Ascending aorta (tissue), 2 donors: ENCODE measurements at regions of chr16 and their contacts with region 1.

Region 1: GRCh38 chr16:30628627-30629540 is 18.7 kb upstream of the ZNF689 start:
- DNase-seq: peak in 1 of 2 donors; percentile 93
- H3K4me3 ChIP-seq: peak overlapping the region in 1 of 2 donors; percentile 40
- H3K27ac ChIP-seq: no peak overlapping the region
- H3K4me1 ChIP-seq: peaks cover 0 to 3% of the 10 kb centered on the region in 2 donors
- H3K27me3 ChIP-seq: no peaks in the 10 kb centered on the region
- CTCF ChIP-seq: peak; percentile 76 to 89 (median 85)

Region 2: GRCh38 chr16:30349675-30350074 is 279.2 kb before region 1 on chr16:
- intact Hi-C with region 1: no loop called
- DNase-seq: peak in 1 of 2 donors; percentile 27
- H3K4me3 ChIP-seq: no peak overlapping the region
- H3K27ac ChIP-seq: no peak overlapping the region
- H3K4me1 ChIP-seq: peaks cover 10 to 29% of the 10 kb centered on the region in 2 donors
- H3K27me3 ChIP-seq: no peaks in the 10 kb centered on the region
- CTCF ChIP-seq: no peak

Region 3: DNA sequence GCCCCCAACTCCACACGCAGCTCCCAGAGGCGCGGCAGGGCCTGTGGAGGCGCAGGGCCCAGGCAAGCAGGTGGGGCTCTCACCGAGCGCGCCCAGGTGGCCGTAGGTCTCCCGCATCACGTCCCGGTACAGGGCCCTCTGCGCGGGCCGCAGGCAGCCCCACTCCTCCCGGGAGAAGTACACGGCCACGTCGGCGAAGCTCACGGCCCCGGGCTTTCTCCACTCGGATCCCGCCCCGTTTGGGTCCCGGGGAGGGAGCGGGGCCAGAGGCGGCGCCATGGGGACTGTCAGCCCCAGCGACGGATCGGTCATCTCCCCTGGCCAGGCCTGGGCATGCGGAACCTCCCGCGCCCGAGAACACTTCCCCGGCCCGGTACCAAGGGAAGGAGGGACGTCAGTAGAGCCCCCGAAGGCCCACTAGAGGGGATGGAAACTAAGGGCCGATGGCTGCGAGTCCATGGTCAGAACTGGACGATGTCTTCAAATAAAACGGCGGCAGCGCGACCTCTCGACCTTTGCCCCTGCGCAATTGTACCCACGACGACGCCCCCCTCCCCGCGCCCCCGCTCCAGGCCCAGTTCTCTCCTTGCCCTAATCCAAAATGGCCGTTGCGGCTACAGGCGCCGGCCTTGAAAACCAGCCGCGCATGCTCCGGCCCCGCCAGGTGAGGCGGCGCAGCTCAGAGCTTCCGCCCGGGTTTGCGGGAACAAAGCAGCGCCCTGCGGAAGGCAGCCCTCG is 94.3 kb before region 1 on chr16 and contains the start of gene ZNF747:
- intact Hi-C with region 1: loop called (anchors 5 kb)
- DNase-seq: peak; percentile 61 to 95
- H3K4me3 ChIP-seq: peak within 1 kb of the TSS; percentile 69 to 93
- H3K27ac ChIP-seq: peak within 1 kb of the TSS; percentile 86 to 96
- H3K4me1 ChIP-seq: peaks cover 11 to 12% of the 10 kb centered on the region in 2 donors
- H3K27me3 ChIP-seq: no peaks in the 10 kb centered on the region
- CTCF ChIP-seq: peak in 1 of 3 experiments; percentile 8
- total RNA-seq, gene ZNF747: 19.6 TPM

Region 4: DNA sequence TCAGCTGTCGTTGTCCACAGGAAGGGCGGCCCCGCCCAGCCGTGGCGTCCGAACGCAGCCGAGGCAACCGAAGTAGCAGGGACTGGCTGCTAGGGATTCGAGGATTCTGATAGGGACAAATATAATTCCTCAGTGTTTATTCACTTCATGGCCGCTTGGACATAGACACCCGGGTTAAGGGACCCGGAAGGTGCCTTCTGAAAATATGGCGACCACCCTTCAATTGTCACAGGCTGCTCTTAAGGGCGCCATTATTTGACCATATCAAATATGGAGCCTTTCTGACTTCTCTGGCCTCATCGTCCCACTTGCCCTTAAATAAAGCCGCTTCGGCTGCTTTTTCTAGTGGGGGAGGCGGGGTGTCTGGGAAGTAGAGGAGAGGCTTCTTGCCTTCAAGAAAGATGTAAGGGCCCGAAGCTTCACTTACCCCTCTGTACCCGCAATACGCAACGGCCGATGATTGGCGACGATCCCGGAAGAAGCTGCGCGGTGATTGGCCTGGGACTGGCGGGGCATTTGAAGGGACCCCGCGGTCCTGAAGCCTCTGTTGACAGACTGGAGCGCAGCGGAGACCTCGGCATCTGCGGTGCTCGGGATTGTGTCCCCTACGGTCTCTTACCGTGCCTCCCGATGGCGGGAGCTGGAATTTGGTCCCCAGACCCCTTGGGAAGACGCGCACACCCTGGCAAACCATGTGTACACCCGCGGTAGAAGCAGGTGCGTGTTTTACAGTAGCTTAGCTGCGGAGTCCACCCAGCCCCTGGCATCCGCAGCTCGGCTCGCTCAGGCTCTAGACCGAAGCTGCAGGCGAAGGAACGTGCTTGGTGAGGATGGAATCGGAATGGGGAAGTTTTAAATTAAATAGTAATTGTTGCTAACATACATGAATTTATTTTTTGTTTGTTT is 56.9 kb before region 1 on chr16 and contains the start of gene ZNF688:
- intact Hi-C with region 1: loop called (anchors 2 kb)
- DNase-seq: peak; percentile 97 to 99
- H3K4me3 ChIP-seq: peak within 1 kb of the TSS; percentile 83 to 92
- H3K27ac ChIP-seq: peak within 1 kb of the TSS; percentile 96 to 99
- H3K4me1 ChIP-seq: peaks cover 13 to 21% of the 10 kb centered on the region in 2 donors
- H3K27me3 ChIP-seq: no peaks in the 10 kb centered on the region
- CTCF ChIP-seq: peak in 1 of 3 experiments; percentile 17
- total RNA-seq, gene ZNF688: 11.3 TPM

Region 5: GRCh38 chr16:30609926-30610839 is 18.7 kb before region 1 on chr16 and contains the start of gene ZNF689:
- intact Hi-C with region 1: loop called (anchors 1 kb)
- DNase-seq: peak; percentile 73 to 97
- H3K4me3 ChIP-seq: peak within 1 kb of the TSS; percentile 81 to 88
- H3K27ac ChIP-seq: peak within 1 kb of the TSS; percentile 88 to 96
- H3K4me1 ChIP-seq: peaks cover 0 to 10% of the 10 kb centered on the region in 2 donors
- H3K27me3 ChIP-seq: no peaks in the 10 kb centered on the region
- CTCF ChIP-seq: peak in 1 of 3 experiments; percentile 5
- total RNA-seq, gene ZNF689: 7.0 TPM

Region 6: GRCh38 chr16:30698139-30698815 is 69.4 kb after region 1 on chr16:
- intact Hi-C with region 1: loop called (anchors 1 kb)
- DNase-seq: peak; percentile 94 to 99
- H3K4me3 ChIP-seq: peak overlapping the region; percentile 89 to 90
- H3K27ac ChIP-seq: peak overlapping the region; percentile 97 to 100
- H3K4me1 ChIP-seq: peaks cover 8 to 16% of the 10 kb centered on the region in 2 donors
- H3K27me3 ChIP-seq: no peaks in the 10 kb centered on the region
- CTCF ChIP-seq: no peak